ENCODE measurements at regions of chr11 and their contacts with region 1.

Region 1: DNA sequence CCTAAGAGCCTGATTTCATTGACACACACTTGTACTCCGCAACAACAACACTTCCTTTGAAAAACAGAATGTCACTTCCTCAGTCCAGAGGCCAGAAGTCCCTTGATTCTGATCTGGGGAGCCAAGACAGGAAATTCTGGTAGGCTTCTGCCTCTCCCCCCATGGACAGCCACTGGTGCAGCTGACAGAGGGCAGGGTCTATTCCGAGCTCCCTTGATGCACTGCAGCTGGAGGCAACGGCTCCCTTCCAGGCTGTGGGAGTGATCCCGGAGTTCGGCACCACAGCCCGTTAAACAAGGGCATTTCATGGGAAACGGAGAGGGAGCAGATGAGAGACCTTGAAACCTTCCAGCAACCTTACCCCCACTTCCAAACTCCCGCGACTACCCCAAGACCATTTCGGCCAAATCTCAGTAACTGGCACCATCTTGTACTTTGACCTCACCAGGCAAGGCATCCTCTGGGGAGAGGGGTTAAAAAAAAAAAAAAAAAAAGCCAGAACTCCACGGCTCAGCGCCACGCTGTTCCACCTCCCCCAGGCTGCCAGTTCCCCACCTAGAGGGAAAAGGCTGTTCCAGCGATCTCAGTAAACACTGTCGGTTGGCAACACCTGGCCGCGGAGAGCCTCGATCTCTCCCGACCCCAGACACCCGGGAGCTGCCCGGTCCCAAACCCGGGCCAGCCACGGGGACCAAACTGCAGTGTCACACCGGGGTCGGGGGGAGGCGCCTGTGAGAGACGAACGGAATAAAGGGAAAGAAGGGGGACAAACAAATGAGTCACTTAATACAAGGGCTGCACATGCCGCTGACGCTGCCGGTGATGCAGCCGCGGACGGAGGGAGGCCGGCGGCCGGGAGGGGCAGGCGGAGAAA is 1.1 kb downstream of the GAB2 start:
- DNase-seq: peak; percentile 67
- ATAC-seq: peak; percentile 82
- H3K4me3 ChIP-seq: peak overlapping the region; percentile 53 to 90
- H3K27ac ChIP-seq: peak overlapping the region; percentile 93
- H3K4me1 ChIP-seq: peaks cover 34% of the 10 kb centered on the region
- H3K27me3 ChIP-seq: peaks cover 2% of the 10 kb centered on the region; the same call in 1 of the 2 replicates
- CTCF ChIP-seq: peak; percentile 85

Region 2: GRCh38 chr11:78228467-78228866 is 188.1 kb before region 1 on chr11:
- CTCF ChIA-PET with region 1: interaction called, 4 read pairs
- POLR2A ChIA-PET with region 1: interaction called, 12 read pairs
- in situ Hi-C with region 1: no loop called
- intact Hi-C with region 1: loop called (anchors 2 kb)
- DNase-seq: peak; percentile 48
- ATAC-seq: peak; percentile 90
- H3K4me3 ChIP-seq: no peak overlapping the region
- H3K27ac ChIP-seq: no peak overlapping the region
- H3K4me1 ChIP-seq: no peaks in the 10 kb centered on the region
- H3K27me3 ChIP-seq: no peaks in the 10 kb centered on the region
- CTCF ChIP-seq: peak; percentile 85

Region 3: GRCh38 chr11:78338138-78338537 is 78.4 kb before region 1 on chr11:
- CTCF ChIA-PET with region 1: no interaction called
- POLR2A ChIA-PET with region 1: no interaction called
- in situ Hi-C with region 1: no loop called
- intact Hi-C with region 1: no loop called
- DNase-seq: no peak
- ATAC-seq: no peak
- H3K4me3 ChIP-seq: no peak overlapping the region
- H3K27ac ChIP-seq: no peak overlapping the region
- H3K4me1 ChIP-seq: no peaks in the 10 kb centered on the region
- H3K27me3 ChIP-seq: no peaks in the 10 kb centered on the region
- CTCF ChIP-seq: no peak

Region 4: DNA sequence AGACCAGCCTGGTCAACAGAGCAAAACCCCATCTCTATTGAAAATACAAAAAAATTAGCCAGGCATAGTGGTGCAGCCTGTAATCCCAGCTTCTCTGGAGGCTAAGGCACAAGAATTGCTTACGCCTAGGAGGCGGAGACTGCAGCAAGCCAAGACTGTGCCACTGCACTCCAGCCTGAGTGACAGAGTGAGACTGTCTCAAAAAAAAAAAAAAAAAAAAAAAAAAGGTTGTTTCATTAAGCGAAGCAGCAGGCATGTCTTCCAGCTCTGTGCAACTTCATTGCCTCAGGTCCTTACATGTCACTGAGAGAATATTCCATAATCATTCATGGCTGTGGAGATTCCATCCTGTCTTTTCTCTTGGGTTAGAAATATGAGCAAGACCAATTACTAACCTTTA is 15.8 kb before region 1 on chr11:
- CTCF ChIA-PET with region 1: interaction called, 12 read pairs
- POLR2A ChIA-PET with region 1: no interaction called
- in situ Hi-C with region 1: no loop called
- intact Hi-C with region 1: no loop called
- DNase-seq: no peak
- ATAC-seq: no peak
- H3K4me3 ChIP-seq: no peak overlapping the region
- H3K27ac ChIP-seq: no peak overlapping the region
- H3K4me1 ChIP-seq: no peaks in the 10 kb centered on the region
- H3K27me3 ChIP-seq: no peaks in the 10 kb centered on the region
- CTCF ChIP-seq: no peak

Region 5: GRCh38 chr11:78532991-78533390 is 116.4 kb after region 1 on chr11:
- CTCF ChIA-PET with region 1: no interaction called
- POLR2A ChIA-PET with region 1: interaction called, 13 read pairs
- in situ Hi-C with region 1: no loop called
- intact Hi-C with region 1: no loop called
- DNase-seq: no peak
- ATAC-seq: no peak
- H3K4me3 ChIP-seq: no peak overlapping the region
- H3K27ac ChIP-seq: no peak overlapping the region
- H3K4me1 ChIP-seq: no peaks in the 10 kb centered on the region
- H3K27me3 ChIP-seq: no peaks in the 10 kb centered on the region
- CTCF ChIP-seq: no peak

Region 6: DNA sequence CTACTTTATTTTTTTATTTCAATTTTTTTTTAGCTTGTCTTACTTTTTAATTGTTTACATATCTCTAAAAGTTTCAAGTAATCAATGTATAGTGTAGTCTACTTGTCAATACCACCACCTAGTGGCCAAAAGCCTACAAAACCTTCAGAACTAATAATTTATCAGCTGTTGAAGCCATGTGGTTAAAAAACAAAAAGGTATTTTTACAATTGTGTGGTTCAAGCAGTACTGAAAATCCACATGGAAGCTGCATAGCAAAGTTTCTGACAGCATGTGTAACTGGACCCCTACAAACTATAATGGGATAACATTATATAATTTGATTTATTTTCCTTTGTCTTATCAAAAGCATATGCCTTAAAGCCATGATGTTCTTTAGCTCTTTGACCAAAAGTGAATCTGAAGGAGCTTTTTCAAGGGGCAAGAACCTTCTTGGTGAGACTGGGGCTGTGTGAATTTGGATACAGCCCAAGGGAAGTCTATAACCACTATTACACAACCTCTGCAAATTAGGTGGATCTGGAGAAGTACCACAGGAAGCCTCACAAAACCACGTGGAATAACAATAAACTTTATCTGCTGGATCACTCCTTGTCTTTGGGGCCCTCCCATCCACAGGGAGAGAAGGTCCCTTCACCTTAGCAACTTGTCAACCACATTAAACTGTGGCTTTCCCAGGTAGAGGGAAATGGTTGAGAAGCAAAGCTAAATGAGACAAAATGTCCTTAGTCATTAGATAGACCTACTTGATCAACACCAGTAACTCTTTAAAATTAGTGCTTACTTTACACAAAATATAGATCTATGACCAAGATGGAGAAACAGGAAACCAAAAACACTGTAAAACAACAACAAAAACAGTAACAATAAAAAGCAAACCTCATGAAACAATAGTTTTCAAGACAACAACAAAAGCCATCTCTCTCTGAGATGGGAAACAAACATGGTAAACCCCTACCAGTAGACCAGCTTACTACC is 148.2 kb after region 1 on chr11:
- CTCF ChIA-PET with region 1: interaction called, 7 read pairs
- POLR2A ChIA-PET with region 1: interaction called, 12 read pairs
- in situ Hi-C with region 1: no loop called
- intact Hi-C with region 1: loop called (anchors 5 kb)
- DNase-seq: peak; percentile 43
- ATAC-seq: peak; percentile 72
- H3K4me3 ChIP-seq: no peak overlapping the region
- H3K27ac ChIP-seq: no peak overlapping the region
- H3K4me1 ChIP-seq: peaks cover 6% of the 10 kb centered on the region; the same call in 1 of the 2 replicates
- H3K27me3 ChIP-seq: no peaks in the 10 kb centered on the region
- CTCF ChIP-seq: peak; percentile 85

Region 7: DNA sequence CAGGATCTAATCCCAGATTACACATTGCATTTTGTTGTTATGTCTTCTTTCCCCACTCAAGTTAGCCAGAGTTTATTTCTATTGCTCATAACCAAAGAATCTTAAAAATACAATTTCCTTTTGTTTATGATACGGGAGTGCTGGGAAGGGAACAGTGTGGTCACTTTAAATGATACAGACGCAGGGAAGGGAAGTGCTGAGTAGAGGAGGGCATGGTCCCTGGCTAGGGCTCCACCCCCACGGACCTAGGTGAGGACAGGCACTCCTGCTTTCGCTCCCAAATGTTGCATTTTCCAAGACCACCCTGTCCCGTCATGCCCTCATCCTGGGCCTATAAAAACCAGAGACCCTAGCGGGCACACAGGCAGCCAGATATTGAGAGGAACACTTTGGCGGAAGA is 188.8 kb after region 1 on chr11:
- CTCF ChIA-PET with region 1: no interaction called
- POLR2A ChIA-PET with region 1: no interaction called
- in situ Hi-C with region 1: no loop called
- intact Hi-C with region 1: no loop called
- DNase-seq: no peak
- ATAC-seq: no peak
- H3K4me3 ChIP-seq: no peak overlapping the region
- H3K27ac ChIP-seq: no peak overlapping the region
- H3K4me1 ChIP-seq: no peaks in the 10 kb centered on the region
- H3K27me3 ChIP-seq: peaks cover 10% of the 10 kb centered on the region
- CTCF ChIP-seq: no peak

Measured in Panc1 (cell line).